ENCODE measurements at regions of chr2 and their contacts with region 1.

Region 1: GRCh38 chr2:151619337-151619989 is 114.8 kb downstream of the NEB start:
- DNase-seq: no peak
- ATAC-seq: no peak
- H3K4me3 ChIP-seq: no peak overlapping the region
- H3K27ac ChIP-seq: no peak overlapping the region
- H3K4me1 ChIP-seq: no peaks in the 10 kb centered on the region
- H3K27me3 ChIP-seq: no peaks in the 10 kb centered on the region

Region 2: GRCh38 chr2:151106805-151107506 is 512.5 kb before region 1 on chr2:
- intact Hi-C with region 1: no loop called
- DNase-seq: no peak
- ATAC-seq: no peak
- H3K4me3 ChIP-seq: no peak overlapping the region
- H3K27ac ChIP-seq: no peak overlapping the region
- H3K4me1 ChIP-seq: no peaks in the 10 kb centered on the region
- H3K27me3 ChIP-seq: no peaks in the 10 kb centered on the region

Region 3: GRCh38 chr2:151560289-151560688 is 59.2 kb before region 1 on chr2:
- intact Hi-C with region 1: no loop called
- DNase-seq: peak in 1 of 2 donors; percentile 47
- ATAC-seq: no peak
- H3K4me3 ChIP-seq: no peak overlapping the region
- H3K27ac ChIP-seq: no peak overlapping the region
- H3K4me1 ChIP-seq: peaks cover 0 to 2% of the 10 kb centered on the region in 2 donors
- H3K27me3 ChIP-seq: no peaks in the 10 kb centered on the region

Region 4: GRCh38 chr2:151819920-151820319 is 200.5 kb after region 1 on chr2:
- intact Hi-C with region 1: loop called in 1 of 2 experiments (anchors 10 kb)
- DNase-seq: no peak
- ATAC-seq: no peak
- H3K4me3 ChIP-seq: no peak overlapping the region
- H3K27ac ChIP-seq: no peak overlapping the region
- H3K4me1 ChIP-seq: peaks cover 4 to 5% of the 10 kb centered on the region in 2 donors
- H3K27me3 ChIP-seq: no peaks in the 10 kb centered on the region

Region 5: DNA sequence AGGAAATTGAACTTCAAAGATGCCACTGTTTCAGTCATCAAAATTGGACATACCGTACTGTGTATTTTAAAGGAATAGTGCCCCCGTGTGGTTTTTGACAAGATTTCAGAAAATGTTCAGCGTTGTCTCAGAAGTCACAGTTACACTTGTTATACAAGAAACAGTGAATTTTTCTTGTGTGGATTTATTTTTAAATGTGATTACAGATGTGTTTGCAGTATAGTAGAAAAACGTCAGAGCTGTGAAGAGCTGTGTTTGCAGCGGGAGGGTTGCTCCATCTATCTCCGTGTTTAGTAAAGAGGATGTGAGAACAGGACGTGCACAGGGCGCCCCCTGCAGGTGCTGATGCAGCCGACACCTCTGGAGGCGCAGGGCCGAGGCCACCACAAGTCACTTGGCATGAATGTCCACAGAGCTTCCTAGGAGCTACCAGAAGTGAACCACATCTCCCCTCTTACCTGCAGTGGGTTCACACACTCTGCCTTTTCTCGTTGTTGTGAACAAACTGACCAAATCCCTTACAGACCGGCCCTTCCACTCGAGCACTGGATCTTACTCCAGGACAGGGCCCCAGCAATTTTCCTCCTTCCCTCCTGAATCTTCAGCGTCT is 406.3 kb after region 1 on chr2:
- intact Hi-C with region 1: loop called (anchors 10 kb)
- DNase-seq: peak; percentile 89 to 95
- ATAC-seq: peak; percentile 93
- H3K4me3 ChIP-seq: no peak overlapping the region
- H3K27ac ChIP-seq: no peak overlapping the region
- H3K4me1 ChIP-seq: no peaks in the 10 kb centered on the region
- H3K27me3 ChIP-seq: no peaks in the 10 kb centered on the region